Heart left ventricle (tissue), 16 donors: ENCODE measurements at regions of chr3 and their contacts with region 1.

Region 1: DNA sequence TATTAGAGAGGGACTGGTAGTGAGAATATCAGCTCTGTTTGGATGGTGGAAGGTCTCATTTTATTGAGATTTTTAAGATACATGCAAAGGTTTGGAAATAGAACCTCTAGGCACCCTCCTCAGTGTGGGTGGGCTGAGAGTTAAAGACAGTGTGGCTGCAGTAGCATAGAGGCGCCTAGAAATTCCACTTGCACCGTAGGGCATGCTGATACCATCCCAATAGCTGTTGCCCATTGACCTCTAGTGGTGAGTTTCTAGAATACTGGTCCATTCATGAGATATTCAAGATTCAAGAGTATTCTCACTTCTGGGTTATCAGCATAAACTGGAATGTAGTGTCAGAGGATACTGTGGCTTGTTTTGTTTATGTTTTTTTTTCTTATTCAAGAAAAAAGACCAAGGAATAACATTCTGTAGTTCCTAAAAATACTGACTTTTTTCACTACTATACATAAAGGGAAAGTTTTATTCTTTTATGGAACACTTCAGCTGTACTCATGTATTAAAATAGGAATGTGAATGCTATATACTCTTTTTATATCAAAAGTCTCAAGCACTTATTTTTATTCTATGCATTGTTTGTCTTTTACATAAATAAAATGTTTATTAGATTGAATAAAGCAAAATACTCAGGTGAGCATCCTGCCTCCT is 87.2 kb downstream of the TGFBR2 start:
- DNase-seq: peak in 4 of 5 donors; percentile 39 to 54 (median 48)
- ATAC-seq: peak; percentile 76 to 82 (median 82)
- H3K4me3 ChIP-seq: no peak overlapping the region
- H3K27ac ChIP-seq: peak overlapping the region in 7 of 12 donors; percentile 17 to 81 (median 35)
- H3K4me1 ChIP-seq: peaks cover 2 to 78% (median 57%) of the 10 kb centered on the region in 12 donors
- H3K27me3 ChIP-seq: no peaks in the 10 kb centered on the region
- CTCF ChIP-seq: peak; percentile 65 to 88 (median 82)
- POLR2A ChIP-seq: no peak

Region 2: GRCh38 chr3:30112902-30113484 is 580.6 kb before region 1 on chr3:
- intact Hi-C with region 1: loop called (anchors 2 to 10 kb)
- DNase-seq: no peak
- ATAC-seq: peak in 2 of 4 donors; percentile 30 to 57
- H3K4me3 ChIP-seq: no peak overlapping the region
- H3K27ac ChIP-seq: no peak overlapping the region
- H3K4me1 ChIP-seq: peaks cover 0 to 17% (median 6%) of the 10 kb centered on the region in 12 donors
- H3K27me3 ChIP-seq: no peaks in the 10 kb centered on the region
- CTCF ChIP-seq: peak; percentile 56 to 81 (median 70)
- POLR2A ChIP-seq: no peak

Region 3: GRCh38 chr3:30227571-30228301 is 465.9 kb before region 1 on chr3:
- intact Hi-C with region 1: loop called in 1 of 10 experiments (anchors 10 kb)
- DNase-seq: no peak
- ATAC-seq: peak; percentile 34 to 76 (median 72)
- H3K4me3 ChIP-seq: no peak overlapping the region
- H3K27ac ChIP-seq: peak overlapping the region in 11 of 12 donors; percentile 4 to 79 (median 42)
- H3K4me1 ChIP-seq: peaks cover 4 to 62% (median 35%) of the 10 kb centered on the region in 12 donors
- H3K27me3 ChIP-seq: no peaks in the 10 kb centered on the region
- CTCF ChIP-seq: no peak
- POLR2A ChIP-seq: no peak

Region 4: DNA sequence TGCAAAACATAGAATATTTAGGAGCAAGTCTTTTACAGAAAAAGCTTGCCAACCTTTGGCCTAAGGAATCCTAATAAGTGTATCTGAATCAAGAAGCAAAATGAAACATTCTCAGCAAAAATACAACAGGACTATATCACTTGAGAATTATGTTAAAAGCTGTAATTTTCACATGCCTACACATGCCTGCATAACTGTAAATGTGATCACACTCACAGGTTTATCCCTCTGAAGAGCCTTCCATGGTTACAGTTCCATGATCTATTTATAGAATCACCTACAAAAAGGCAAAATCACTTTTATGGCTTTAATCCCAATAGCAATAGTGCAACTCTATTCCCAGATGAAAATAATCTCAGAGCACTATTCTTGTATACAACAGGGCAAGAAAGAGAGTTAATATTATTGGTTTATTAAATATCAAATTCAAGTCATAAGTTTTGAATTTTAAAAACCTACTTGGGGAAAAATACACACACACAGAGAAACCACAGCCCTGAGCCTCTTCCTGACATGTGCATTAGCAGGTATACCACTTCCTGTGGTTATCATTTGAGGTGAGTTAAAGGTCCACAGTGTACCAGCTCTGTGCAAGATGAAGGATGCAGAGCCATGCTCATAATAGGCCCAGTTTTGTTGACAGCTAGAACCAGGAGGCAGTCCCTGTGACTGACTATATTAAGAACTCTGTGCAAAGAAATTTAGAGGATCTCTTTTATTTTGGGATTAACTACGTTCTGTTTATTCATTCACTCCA is 339.7 kb before region 1 on chr3:
- intact Hi-C with region 1: loop called in 3 of 10 experiments (anchors 10 kb)
- DNase-seq: no peak
- ATAC-seq: peak; percentile 67 to 84 (median 80)
- H3K4me3 ChIP-seq: no peak overlapping the region
- H3K27ac ChIP-seq: peak overlapping the region; percentile 62 to 91 (median 72)
- H3K4me1 ChIP-seq: peaks cover 4 to 62% (median 37%) of the 10 kb centered on the region in 12 donors
- H3K27me3 ChIP-seq: no peaks in the 10 kb centered on the region
- CTCF ChIP-seq: no peak
- POLR2A ChIP-seq: no peak

Region 5: DNA sequence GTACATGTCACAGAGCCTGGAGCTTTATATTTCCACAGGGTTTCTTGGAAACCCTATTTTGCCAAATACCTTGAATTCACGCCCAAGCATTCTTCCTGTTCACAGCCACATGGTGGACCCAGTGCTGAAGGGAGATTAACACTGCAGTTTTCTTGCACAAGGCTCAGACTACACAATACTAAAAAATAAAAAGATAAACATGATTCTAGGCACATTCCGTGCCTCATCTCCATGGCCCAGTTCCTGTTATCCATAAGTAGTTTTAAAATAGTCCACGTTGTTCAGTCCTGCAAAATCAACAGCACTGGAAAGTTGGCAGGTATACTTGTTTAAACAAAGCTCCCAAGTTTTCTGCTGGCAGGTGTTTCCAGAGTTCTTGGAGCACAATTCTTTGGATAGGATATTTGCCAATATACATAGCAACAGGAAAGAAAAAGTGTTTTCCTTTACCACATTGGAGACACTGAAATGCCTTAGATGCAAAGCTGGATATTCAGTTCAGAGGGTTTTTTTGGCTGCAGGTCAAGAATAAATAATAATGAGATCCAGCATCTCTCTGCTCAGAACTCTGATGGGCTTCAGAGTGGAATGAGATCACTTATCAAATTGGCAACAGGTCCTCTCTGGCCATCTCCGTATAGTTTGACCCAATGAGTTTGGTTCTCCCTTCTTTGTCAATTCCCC is 175.3 kb before region 1 on chr3:
- intact Hi-C with region 1: loop called in 9 of 10 experiments (anchors 1 to 10 kb)
- DNase-seq: peak in 4 of 5 donors; percentile 26 to 52 (median 36)
- ATAC-seq: peak; percentile 89 to 94 (median 92)
- H3K4me3 ChIP-seq: no peak overlapping the region
- H3K27ac ChIP-seq: peak overlapping the region; percentile 34 to 84 (median 73)
- H3K4me1 ChIP-seq: peaks cover 0 to 45% (median 29%) of the 10 kb centered on the region in 12 donors
- H3K27me3 ChIP-seq: no peaks in the 10 kb centered on the region
- CTCF ChIP-seq: peak in 7 of 12 donors; percentile 9 to 50 (median 26)
- POLR2A ChIP-seq: no peak

Region 6: GRCh38 chr3:30611613-30612436 is 81.8 kb before region 1 on chr3:
- intact Hi-C with region 1: loop called in 5 of 10 experiments (anchors 2 to 5 kb)
- DNase-seq: no peak
- ATAC-seq: no peak
- H3K4me3 ChIP-seq: peak overlapping the region in 4 of 12 donors; percentile 10 to 98 (median 94)
- H3K27ac ChIP-seq: peak overlapping the region in 9 of 12 donors; percentile 2 to 100 (median 47)
- H3K4me1 ChIP-seq: peaks cover 5 to 89% (median 79%) of the 10 kb centered on the region in 12 donors
- H3K27me3 ChIP-seq: no peaks in the 10 kb centered on the region
- CTCF ChIP-seq: no peak
- POLR2A ChIP-seq: no peak